Right ventricle myocardium inferior (tissue), 1 donor: ENCODE measurements at regions of chr12 and their contacts with region 1.

Region 1: GRCh38 chr12:48350249-48351021 is at the start of gene ZNF641:
- DNase-seq: peak; percentile 95
- ATAC-seq: peak; percentile 95
- total RNA-seq, gene ZNF641: 17.3 TPM

Region 2: GRCh38 chr12:47981496-47982260 is 368.8 kb before region 1 on chr12:
- intact Hi-C with region 1: no loop called
- DNase-seq: no peak
- ATAC-seq: no peak

Region 3: GRCh38 chr12:48296586-48297282 is 53.7 kb before region 1 on chr12:
- intact Hi-C with region 1: loop called (anchors 2 kb)
- DNase-seq: peak; percentile 90
- ATAC-seq: peak; percentile 98

Region 4: GRCh38 chr12:48311313-48311712 is 39.1 kb before region 1 on chr12:
- intact Hi-C with region 1: no loop called
- DNase-seq: no peak
- ATAC-seq: no peak

Region 5: GRCh38 chr12:48414021-48414420 is 63.6 kb after region 1 on chr12:
- intact Hi-C with region 1: loop called (anchors 5 kb)
- DNase-seq: no peak
- ATAC-seq: peak; percentile 95